CD4-positive, alpha-beta T cell (primary cell): ENCODE measurements at regions of chr13 and their contacts with region 1.

Region 1: DNA sequence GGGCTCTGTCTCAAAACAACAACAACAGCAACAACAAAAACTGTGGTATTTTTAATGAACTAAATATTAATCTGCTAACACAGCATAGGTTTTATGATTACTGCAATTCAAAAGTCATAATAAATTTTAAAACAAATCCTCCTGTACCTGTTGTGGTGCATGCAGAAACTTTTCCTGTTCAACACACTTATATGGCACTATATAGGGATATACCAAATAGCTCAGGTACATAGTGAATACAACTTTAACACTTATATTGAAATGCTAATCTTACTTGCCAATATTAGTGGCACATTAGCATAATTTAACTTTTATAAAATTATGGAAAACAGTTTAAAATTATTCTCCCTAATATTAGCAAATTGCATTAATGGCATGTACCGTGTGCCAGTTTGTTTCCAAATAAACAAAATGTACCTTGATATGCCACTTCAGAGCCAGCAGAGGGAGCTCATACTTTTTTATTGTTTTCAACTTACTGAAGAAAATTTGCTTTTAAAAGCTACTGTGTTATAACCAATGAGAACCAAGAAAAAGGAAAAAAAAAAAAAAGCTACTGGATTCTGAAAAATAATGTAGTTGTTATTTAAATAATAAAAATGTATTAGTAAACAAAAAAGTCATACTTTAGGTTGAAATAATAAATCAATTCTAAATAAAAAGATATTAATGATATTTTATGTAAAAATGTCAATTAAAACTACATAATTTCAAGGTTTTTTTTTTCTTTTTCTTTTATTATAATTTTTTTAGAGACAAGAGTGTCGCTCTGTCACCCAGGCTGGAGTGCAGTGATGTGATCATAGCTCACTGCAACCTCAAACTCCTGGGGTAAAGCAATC is 18.0 kb upstream of the RBM26 start:
- DNase-seq: peak in 4 of 14 experiments; percentile 21 to 73 (median 62)
- ATAC-seq: peak; percentile 71
- H3K4me3 ChIP-seq: no peak overlapping the region
- H3K4me3 Mint-ChIP-seq: no peak overlapping the region
- H3K27ac ChIP-seq: no peak overlapping the region
- H3K27ac Mint-ChIP-seq: no peak overlapping the region
- H3K4me1 ChIP-seq: no peaks in the 10 kb centered on the region
- H3K4me1 Mint-ChIP-seq: no peaks in the 10 kb centered on the region
- H3K27me3 ChIP-seq: no peaks in the 10 kb centered on the region
- H3K27me3 Mint-ChIP-seq: no peaks in the 10 kb centered on the region
- CTCF ChIP-seq: peak; percentile 86

Region 2: GRCh38 chr13:78137404-78138142 is 1286.4 kb before region 1 on chr13:
- CTCF ChIA-PET with region 1: no interaction called
- POLR2A ChIA-PET with region 1: no interaction called
- intact Hi-C with region 1: loop called in 1 of 2 experiments (anchors 10 kb)
- DNase-seq: peak in 4 of 14 experiments; percentile 10 to 55 (median 43)
- ATAC-seq: peak; percentile 65
- H3K4me3 ChIP-seq: no peak overlapping the region
- H3K4me3 Mint-ChIP-seq: no peak overlapping the region
- H3K27ac ChIP-seq: no peak overlapping the region
- H3K27ac Mint-ChIP-seq: no peak overlapping the region
- H3K4me1 ChIP-seq: peaks cover 7% of the 10 kb centered on the region
- H3K4me1 Mint-ChIP-seq: peaks cover 6% of the 10 kb centered on the region
- H3K27me3 ChIP-seq: no peaks in the 10 kb centered on the region
- H3K27me3 Mint-ChIP-seq: peaks cover 4% of the 10 kb centered on the region
- CTCF ChIP-seq: peak; percentile 79

Region 3: DNA sequence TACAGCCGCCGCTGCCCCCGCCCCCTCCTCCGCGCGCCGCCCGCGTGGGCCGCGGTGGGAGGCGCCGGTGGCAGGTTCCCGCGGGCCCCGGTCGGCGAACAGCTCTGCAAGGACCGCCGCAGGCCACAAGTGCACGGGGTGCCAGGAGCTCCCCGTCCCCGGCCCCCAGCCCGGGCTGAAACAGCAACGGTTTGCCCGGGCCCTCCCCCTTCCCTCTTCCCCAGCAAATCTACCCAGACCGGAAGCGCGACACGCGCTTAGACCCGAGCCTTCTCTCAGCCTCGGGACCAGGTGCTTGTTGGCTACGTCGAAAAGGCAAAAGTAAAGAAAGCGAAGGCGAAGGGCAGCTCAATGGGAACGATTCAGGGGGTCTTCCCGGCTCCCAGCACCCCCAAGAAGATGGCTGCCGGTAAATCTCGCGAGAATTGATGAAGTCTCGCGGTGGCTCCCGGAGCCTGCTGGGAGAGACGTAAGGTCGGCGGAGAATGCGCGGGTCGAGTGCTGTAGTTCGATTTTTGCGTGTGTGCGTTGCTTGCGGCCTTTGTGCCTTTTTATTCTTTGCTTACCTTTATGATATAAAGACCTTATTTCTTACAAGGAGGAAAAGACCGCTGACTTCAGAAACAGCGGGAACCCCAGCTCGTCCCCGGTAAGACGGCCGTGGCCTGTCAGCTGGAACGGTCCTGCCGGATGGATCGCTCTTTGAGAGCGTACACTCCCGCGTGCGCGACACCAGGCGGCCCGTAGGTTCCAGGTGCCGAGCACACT is 18.0 kb before region 1 on chr13 and contains the start of gene RBM26:
- CTCF ChIA-PET with region 1: interaction called, 7 read pairs
- POLR2A ChIA-PET with region 1: interaction called, 10 read pairs
- intact Hi-C with region 1: no loop called
- DNase-seq: peak; percentile 87 to 97 (median 92)
- ATAC-seq: peak; percentile 86
- H3K4me3 ChIP-seq: peak within 1 kb of the TSS; percentile 68
- H3K4me3 Mint-ChIP-seq: peak within 1 kb of the TSS; percentile 95
- H3K27ac ChIP-seq: peak within 1 kb of the TSS; percentile 93 to 95
- H3K27ac Mint-ChIP-seq: no peak within 1 kb of the TSS
- H3K4me1 ChIP-seq: peaks cover 21% of the 10 kb centered on the region
- H3K4me1 Mint-ChIP-seq: peaks cover 44% of the 10 kb centered on the region
- H3K27me3 ChIP-seq: no peaks in the 10 kb centered on the region
- H3K27me3 Mint-ChIP-seq: no peaks in the 10 kb centered on the region
- CTCF ChIP-seq: no peak
- total RNA-seq, gene RBM26: 67.3 to 68.0 TPM

Region 4: GRCh38 chr13:79491715-79492114 is 67.7 kb after region 1 on chr13:
- CTCF ChIA-PET with region 1: interaction called, 3 read pairs
- POLR2A ChIA-PET with region 1: no interaction called
- intact Hi-C with region 1: loop called in 1 of 2 experiments (anchors 5 kb)
- DNase-seq: no peak
- ATAC-seq: no peak
- H3K4me3 ChIP-seq: no peak overlapping the region
- H3K4me3 Mint-ChIP-seq: peak overlapping the region; percentile 12
- H3K27ac ChIP-seq: no peak overlapping the region
- H3K27ac Mint-ChIP-seq: no peak overlapping the region
- H3K4me1 ChIP-seq: peaks cover 4% of the 10 kb centered on the region
- H3K4me1 Mint-ChIP-seq: peaks cover 72% of the 10 kb centered on the region
- H3K27me3 ChIP-seq: no peaks in the 10 kb centered on the region
- H3K27me3 Mint-ChIP-seq: no peaks in the 10 kb centered on the region
- CTCF ChIP-seq: no peak

Region 5: GRCh38 chr13:79541426-79542049 is 117.5 kb after region 1 on chr13:
- CTCF ChIA-PET with region 1: interaction called, 35 read pairs
- POLR2A ChIA-PET with region 1: interaction called, 26 read pairs
- intact Hi-C with region 1: loop called (anchors 1 kb)
- DNase-seq: peak in 3 of 14 experiments; percentile 73 to 82 (median 80)
- ATAC-seq: peak; percentile 63
- H3K4me3 ChIP-seq: no peak overlapping the region
- H3K4me3 Mint-ChIP-seq: no peak overlapping the region
- H3K27ac ChIP-seq: no peak overlapping the region
- H3K27ac Mint-ChIP-seq: no peak overlapping the region
- H3K4me1 ChIP-seq: no peaks in the 10 kb centered on the region
- H3K4me1 Mint-ChIP-seq: no peaks in the 10 kb centered on the region
- H3K27me3 ChIP-seq: no peaks in the 10 kb centered on the region
- H3K27me3 Mint-ChIP-seq: no peaks in the 10 kb centered on the region
- CTCF ChIP-seq: peak; percentile 97